HCT116 (cell line): ENCODE measurements at regions of chr17 and their contacts with region 1.

Region 1: GRCh38 chr17:8041249-8041928 is 2.5 kb downstream of the ALOX15B start:
- DNase-seq: peak; percentile 72
- ATAC-seq: peak; percentile 78
- H3K4me3 ChIP-seq: no peak overlapping the region
- H3K27ac ChIP-seq: no peak overlapping the region
- H3K4me1 ChIP-seq: peaks cover 0 to 6% of the 10 kb centered on the region in 2 experiments; a peak in 1 of 4 replicates
- H3K27me3 ChIP-seq: no peaks in the 10 kb centered on the region
- CTCF ChIP-seq: peak; percentile 56 to 96 (median 82)
- POLR2A ChIP-seq: no peak
- RAD21 ChIP-seq: peak; percentile 97

Region 2: DNA sequence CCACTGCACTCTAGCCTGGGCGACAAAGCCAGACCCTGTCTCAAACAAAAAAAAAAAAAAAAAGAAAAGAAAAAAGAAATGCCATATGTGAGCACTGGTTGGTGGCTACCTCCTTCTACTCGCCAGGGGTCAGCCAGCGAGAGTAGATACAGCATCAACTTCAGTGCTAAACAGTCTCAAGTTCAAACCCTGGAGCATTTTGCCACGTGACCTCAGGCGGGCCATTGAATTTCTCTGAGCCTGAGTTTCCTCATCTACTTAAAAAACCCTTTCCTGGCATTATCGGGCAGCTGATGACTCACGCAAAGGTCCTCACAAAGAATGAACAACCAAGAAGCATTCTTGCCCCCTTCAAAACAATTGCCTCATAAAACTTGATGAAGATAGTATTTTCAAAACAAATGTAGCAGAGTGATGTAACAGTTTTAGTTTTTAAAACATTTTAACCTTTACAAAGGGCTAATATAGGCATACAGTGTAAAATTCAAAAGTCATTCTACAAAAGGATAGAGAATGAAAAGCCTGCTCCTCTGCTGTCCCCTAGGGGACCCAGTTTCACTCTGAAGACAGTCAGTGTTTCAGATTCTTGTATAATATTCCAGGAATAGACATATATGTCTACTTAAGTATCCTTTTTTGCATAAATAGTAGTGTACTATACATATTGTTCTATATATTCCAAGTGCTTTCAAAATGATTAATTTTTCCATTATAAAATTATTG is 295.5 kb before region 1 on chr17:
- CTCF ChIA-PET with region 1: interaction called, 14 read pairs
- POLR2A ChIA-PET with region 1: no interaction called
- RAD21 ChIA-PET with region 1: interaction called in 1 of 2 experiments, 4 read pairs
- intact Hi-C with region 1: loop called (anchors 1 kb)
- DNase-seq: peak; percentile 73
- ATAC-seq: peak; percentile 74
- H3K4me3 ChIP-seq: peak overlapping the region in 1 of 2 experiments; percentile 14; a peak in 2 of 4 replicates
- H3K27ac ChIP-seq: peak overlapping the region; percentile 60
- H3K4me1 ChIP-seq: peaks cover 23 to 41% of the 10 kb centered on the region in 2 experiments
- H3K27me3 ChIP-seq: no peaks in the 10 kb centered on the region
- CTCF ChIP-seq: peak; percentile 28 to 43 (median 43); a peak in 5 of 6 replicates
- POLR2A ChIP-seq: no peak
- RAD21 ChIP-seq: peak; percentile 53

Region 3: GRCh38 chr17:7862692-7863437 is 178.5 kb before region 1 on chr17:
- CTCF ChIA-PET with region 1: interaction called, 31 read pairs
- POLR2A ChIA-PET with region 1: no interaction called
- RAD21 ChIA-PET with region 1: interaction called in 1 of 2 experiments, 5 read pairs
- intact Hi-C with region 1: loop called (anchors 1 kb)
- DNase-seq: no peak
- ATAC-seq: no peak
- H3K4me3 ChIP-seq: no peak overlapping the region
- H3K27ac ChIP-seq: no peak overlapping the region
- H3K4me1 ChIP-seq: peaks cover 6 to 24% of the 10 kb centered on the region in 2 experiments
- H3K27me3 ChIP-seq: no peaks in the 10 kb centered on the region
- CTCF ChIP-seq: peak; percentile 66 to 88 (median 74)
- POLR2A ChIP-seq: no peak
- RAD21 ChIP-seq: peak; percentile 89

Region 4: DNA sequence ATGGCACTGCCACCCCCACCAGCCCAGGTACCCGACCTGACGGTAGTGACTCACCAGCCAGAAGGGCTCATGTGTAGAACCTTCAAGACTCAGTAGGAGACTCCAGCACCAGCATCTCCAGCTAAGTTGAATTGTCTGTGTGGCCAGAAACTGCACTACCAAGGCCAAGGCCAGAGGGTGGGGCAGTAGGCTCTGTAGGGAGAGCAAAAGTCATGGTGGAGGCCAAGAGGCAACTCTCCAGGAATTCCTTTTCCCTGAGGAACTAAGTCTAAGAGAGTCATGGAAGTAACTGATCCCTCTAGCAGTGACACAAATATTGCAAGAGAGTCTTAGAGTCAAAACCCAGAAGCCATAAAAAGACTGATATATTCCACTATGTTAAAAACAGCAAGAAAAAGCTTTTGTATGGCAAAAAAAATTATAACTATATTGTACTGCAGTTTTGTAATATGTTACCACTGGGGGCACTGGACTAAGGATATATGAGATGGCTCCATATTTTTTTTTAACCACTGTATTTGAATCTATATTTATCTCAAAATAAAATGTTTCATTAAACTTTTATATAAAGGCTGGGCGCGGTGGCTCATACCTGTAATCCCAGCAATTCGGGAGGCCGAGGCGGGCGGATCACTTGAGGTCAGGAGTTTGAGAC is 69.1 kb before region 1 on chr17:
- CTCF ChIA-PET with region 1: interaction called, 10 read pairs
- POLR2A ChIA-PET with region 1: no interaction called
- RAD21 ChIA-PET with region 1: interaction called in 1 of 2 experiments, 5 read pairs
- intact Hi-C with region 1: no loop called
- DNase-seq: no peak
- ATAC-seq: peak; percentile 53
- H3K4me3 ChIP-seq: no peak overlapping the region
- H3K27ac ChIP-seq: no peak overlapping the region
- H3K4me1 ChIP-seq: no peaks in the 10 kb centered on the region
- H3K27me3 ChIP-seq: no peaks in the 10 kb centered on the region
- CTCF ChIP-seq: peak in 2 of 3 experiments; percentile 15 to 40; a peak in 3 of 6 replicates
- POLR2A ChIP-seq: no peak
- RAD21 ChIP-seq: no peak

Region 5: GRCh38 chr17:7997186-7997585 is 44.2 kb before region 1 on chr17:
- CTCF ChIA-PET with region 1: interaction called, 18 read pairs
- POLR2A ChIA-PET with region 1: no interaction called
- RAD21 ChIA-PET with region 1: interaction called in 1 of 2 experiments, 5 read pairs
- intact Hi-C with region 1: loop called (anchors 5 kb)
- DNase-seq: peak; percentile 67
- ATAC-seq: peak; percentile 97
- H3K4me3 ChIP-seq: peak overlapping the region in 1 of 2 experiments; percentile 27; a peak in 1 of 4 replicates
- H3K27ac ChIP-seq: peak overlapping the region; percentile 49
- H3K4me1 ChIP-seq: peaks cover 13 to 22% of the 10 kb centered on the region in 2 experiments
- H3K27me3 ChIP-seq: no peaks in the 10 kb centered on the region
- CTCF ChIP-seq: peak; percentile 61 to 87 (median 66)
- POLR2A ChIP-seq: no peak
- RAD21 ChIP-seq: peak; percentile 62

Region 6: DNA sequence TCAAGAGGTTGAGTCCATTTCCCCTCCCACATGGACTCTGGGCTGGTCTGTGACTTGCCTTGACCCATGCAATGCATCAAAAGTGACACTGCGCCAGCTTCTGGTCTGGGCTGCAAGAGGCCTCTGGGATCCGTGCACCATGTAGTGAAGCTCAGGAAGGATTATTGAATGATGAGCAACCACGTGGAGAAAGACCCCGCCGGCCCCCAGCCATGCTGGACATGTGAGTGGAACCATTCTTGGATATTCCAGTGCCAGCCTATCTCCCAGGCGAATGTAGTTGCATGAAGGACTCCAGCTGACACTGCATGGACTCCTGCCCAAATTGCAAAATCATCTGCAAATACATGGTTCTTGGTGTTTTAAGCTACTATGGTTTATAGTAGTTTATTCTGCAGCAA is 10.1 kb before region 1 on chr17:
- CTCF ChIA-PET with region 1: interaction called, 14 read pairs
- POLR2A ChIA-PET with region 1: no interaction called
- RAD21 ChIA-PET with region 1: no interaction called
- intact Hi-C with region 1: no loop called
- DNase-seq: no peak
- ATAC-seq: no peak
- H3K4me3 ChIP-seq: no peak overlapping the region
- H3K27ac ChIP-seq: no peak overlapping the region
- H3K4me1 ChIP-seq: no peaks in the 10 kb centered on the region
- H3K27me3 ChIP-seq: no peaks in the 10 kb centered on the region; the same call in 1 of the 2 replicates
- CTCF ChIP-seq: no peak
- POLR2A ChIP-seq: no peak
- RAD21 ChIP-seq: no peak

Region 7: GRCh38 chr17:8109661-8110464 is 68.5 kb after region 1 on chr17:
- CTCF ChIA-PET with region 1: no interaction called
- POLR2A ChIA-PET with region 1: no interaction called
- RAD21 ChIA-PET with region 1: no interaction called
- intact Hi-C with region 1: no loop called
- DNase-seq: no peak
- ATAC-seq: peak; percentile 99
- H3K4me3 ChIP-seq: no peak overlapping the region
- H3K27ac ChIP-seq: no peak overlapping the region
- H3K4me1 ChIP-seq: peaks cover 0 to 9% of the 10 kb centered on the region in 2 experiments; a peak in 2 of 4 replicates
- H3K27me3 ChIP-seq: no peaks in the 10 kb centered on the region
- CTCF ChIP-seq: peak; percentile 82 to 89 (median 88)
- POLR2A ChIP-seq: no peak
- RAD21 ChIP-seq: peak; percentile 84